ENCODE measurements at regions of chr4 and their contacts with region 1.

Region 1: GRCh38 chr4:5998333-5998936 is 19.8 kb downstream of the C4orf50 start:
- DNase-seq: peak; percentile 88
- H3K4me3 ChIP-seq: peak overlapping the region in 1 of 2 experiments; percentile 57; a peak in 1 of 4 replicates
- H3K27ac ChIP-seq: no peak overlapping the region; a peak in 1 of 4 replicates
- H3K4me1 ChIP-seq: peaks cover 0 to 23% of the 10 kb centered on the region in 2 experiments; a peak in 1 of 4 replicates
- H3K27me3 ChIP-seq: no peaks in the 10 kb centered on the region
- CTCF ChIP-seq: peak; percentile 62
- EP300 ChIP-seq: no peak
- RAD21 ChIP-seq: peak; percentile 96

Region 2: GRCh38 chr4:5798462-5798861 is 200.0 kb before region 1 on chr4:
- CTCF ChIA-PET with region 1: no interaction called
- POLR2A ChIA-PET with region 1: no interaction called
- DNase-seq: no peak
- H3K4me3 ChIP-seq: no peak overlapping the region
- H3K27ac ChIP-seq: no peak overlapping the region
- H3K4me1 ChIP-seq: peaks cover 0 to 2% of the 10 kb centered on the region in 2 experiments; a peak in 1 of 4 replicates
- H3K27me3 ChIP-seq: no peaks in the 10 kb centered on the region
- CTCF ChIP-seq: no peak
- EP300 ChIP-seq: no peak
- RAD21 ChIP-seq: no peak

Region 3: DNA sequence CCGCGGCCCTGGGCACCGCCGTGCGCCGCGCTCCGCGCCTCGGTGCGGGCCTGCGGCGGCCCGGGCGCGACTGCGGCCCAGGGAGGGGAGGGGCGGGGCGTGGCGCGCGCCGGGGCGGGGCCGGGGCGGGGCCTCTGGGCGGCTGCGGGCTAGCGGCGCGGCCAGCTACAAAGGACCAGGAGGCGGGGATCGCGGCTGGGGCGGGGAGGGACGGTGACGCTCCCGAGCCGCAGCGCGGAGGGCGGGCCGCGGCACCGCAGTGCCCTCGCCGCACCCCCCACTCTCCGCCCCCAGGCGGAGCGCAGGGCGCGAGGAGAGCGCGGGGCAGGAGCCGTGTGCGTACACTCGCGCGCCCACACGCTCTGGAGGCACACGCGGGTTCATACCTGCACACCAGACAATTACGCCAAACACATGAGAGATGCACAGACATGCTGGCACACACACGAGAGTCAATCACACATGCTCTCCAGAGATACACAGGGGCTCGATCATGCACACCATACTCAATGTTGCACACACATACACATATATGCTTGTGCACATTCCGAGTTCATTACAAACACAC is 105.3 kb before region 1 on chr4 and contains the start of gene CRMP1:
- CTCF ChIA-PET with region 1: interaction called, 10 read pairs
- POLR2A ChIA-PET with region 1: no interaction called
- DNase-seq: peak; percentile 97
- H3K4me3 ChIP-seq: peak within 1 kb of the TSS in 1 of 2 experiments; percentile 49; a peak in 2 of 4 replicates
- H3K27ac ChIP-seq: peak within 1 kb of the TSS in 1 of 2 experiments; percentile 55; a peak in 2 of 4 replicates
- H3K4me1 ChIP-seq: peaks cover 0 to 25% of the 10 kb centered on the region in 2 experiments; a peak in 1 of 4 replicates
- H3K27me3 ChIP-seq: peaks cover 28% of the 10 kb centered on the region; the same call in 1 of the 2 replicates
- CTCF ChIP-seq: no peak
- EP300 ChIP-seq: no peak
- RAD21 ChIP-seq: no peak
- polyA plus RNA-seq, gene CRMP1: 3.4 and 7.8 TPM in 2 replicates

Region 4: GRCh38 chr4:6011686-6012085 is 13.3 kb after region 1 on chr4:
- CTCF ChIA-PET with region 1: interaction called, 107 read pairs
- POLR2A ChIA-PET with region 1: no interaction called
- DNase-seq: peak; percentile 73
- H3K4me3 ChIP-seq: no peak overlapping the region
- H3K27ac ChIP-seq: no peak overlapping the region; a peak in 1 of 4 replicates
- H3K4me1 ChIP-seq: peaks cover 0 to 9% of the 10 kb centered on the region in 2 experiments; a peak in 1 of 4 replicates
- H3K27me3 ChIP-seq: no peaks in the 10 kb centered on the region
- CTCF ChIP-seq: no peak
- EP300 ChIP-seq: no peak
- RAD21 ChIP-seq: no peak

Region 5: DNA sequence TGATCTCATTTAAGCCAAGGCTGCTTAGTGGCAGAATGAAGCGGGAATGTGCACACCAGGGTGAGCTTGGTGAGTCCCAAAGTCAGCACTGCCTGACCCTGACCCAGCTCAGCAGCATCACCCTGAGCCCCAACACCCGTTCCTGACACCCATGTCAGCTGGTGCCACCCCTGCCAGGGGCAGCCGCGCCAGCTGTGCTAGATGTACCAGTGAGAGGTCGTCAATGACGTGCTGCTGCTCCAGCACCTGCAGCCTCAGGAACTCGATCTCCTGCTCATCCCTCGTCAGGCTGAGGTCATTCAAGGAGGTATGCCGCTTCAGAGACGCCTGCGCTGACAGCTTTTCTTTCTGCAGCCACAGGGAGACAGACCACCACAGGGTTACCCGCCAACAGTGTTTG is 81.5 kb after region 1 on chr4:
- CTCF ChIA-PET with region 1: interaction called, 92 read pairs
- POLR2A ChIA-PET with region 1: no interaction called
- DNase-seq: no peak
- H3K4me3 ChIP-seq: no peak overlapping the region
- H3K27ac ChIP-seq: no peak overlapping the region
- H3K4me1 ChIP-seq: no peaks in the 10 kb centered on the region
- H3K27me3 ChIP-seq: no peaks in the 10 kb centered on the region
- CTCF ChIP-seq: no peak
- EP300 ChIP-seq: no peak
- RAD21 ChIP-seq: no peak

Region 6: DNA sequence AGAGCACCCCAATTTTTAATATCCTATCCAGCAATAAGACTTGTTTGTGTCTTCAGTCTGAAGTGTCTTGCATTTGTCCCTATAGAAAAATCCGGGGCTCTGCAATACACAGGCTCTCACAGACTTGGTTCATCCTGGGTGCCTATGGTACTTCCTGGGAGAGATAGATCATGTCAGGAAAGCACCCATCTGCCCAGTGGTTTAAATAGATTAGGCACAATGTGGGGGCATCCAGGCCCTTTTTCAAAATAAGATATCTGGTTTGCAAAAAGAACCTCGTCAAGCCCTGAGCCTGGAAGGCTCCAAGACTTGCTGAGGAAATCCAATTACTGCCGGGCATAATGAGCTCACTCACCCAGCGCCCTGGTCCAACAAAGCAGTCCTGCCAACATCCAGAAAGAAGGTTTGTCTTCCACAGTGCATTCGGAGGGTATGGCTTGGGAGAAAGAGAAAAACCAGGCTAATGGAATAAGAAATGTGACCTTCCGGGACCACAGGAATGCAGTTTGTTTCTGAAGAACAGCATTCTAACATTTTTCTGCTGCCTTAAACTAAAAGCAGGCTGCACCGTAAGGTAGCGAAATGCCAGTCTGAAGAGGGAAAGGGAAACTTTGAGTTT is 190.4 kb after region 1 on chr4:
- CTCF ChIA-PET with region 1: interaction called, 20 read pairs
- POLR2A ChIA-PET with region 1: no interaction called
- DNase-seq: peak; percentile 67
- H3K4me3 ChIP-seq: no peak overlapping the region
- H3K27ac ChIP-seq: peak overlapping the region in 1 of 2 experiments; percentile 91; a peak in 2 of 4 replicates
- H3K4me1 ChIP-seq: peaks cover 0 to 49% of the 10 kb centered on the region in 2 experiments; a peak in 2 of 4 replicates
- H3K27me3 ChIP-seq: no peaks in the 10 kb centered on the region
- CTCF ChIP-seq: no peak
- EP300 ChIP-seq: peak in 1 of 2 experiments; percentile 60; a peak in 1 of 4 replicates
- RAD21 ChIP-seq: no peak

Region 7: DNA sequence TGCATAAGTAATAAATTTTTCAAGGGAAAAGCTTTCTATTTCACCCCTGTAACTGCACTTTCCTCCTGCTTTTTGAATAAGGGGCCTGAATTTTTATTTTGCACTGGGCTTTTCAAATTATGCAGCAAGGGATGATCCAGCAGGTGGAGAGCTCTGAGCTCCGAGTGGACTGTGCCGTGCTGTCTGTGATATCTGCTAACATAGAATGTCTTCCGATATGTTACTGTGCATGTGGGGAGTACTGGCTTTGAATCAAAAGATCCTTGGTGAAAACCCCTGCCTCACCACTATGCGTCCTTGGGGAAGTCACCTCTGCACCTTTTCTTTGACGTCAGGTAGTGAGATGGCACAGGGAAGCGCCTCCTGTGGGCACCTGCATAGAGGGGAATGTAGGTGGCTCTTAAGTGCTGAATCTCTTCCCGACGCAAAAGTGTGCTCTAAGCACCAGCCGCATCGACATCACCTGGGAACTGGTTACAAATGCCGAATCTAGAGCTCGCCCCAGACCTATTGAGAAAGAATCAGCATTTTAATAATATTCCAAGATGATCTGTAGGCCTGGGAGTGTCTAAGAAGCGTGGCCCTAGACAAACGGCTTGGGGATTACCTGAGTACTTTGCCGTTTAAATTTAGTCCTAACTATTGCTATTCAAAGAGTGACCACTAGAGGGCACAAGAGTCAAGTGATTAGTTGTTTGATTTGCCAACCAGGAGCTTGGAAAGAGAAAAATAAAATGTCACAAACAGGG is 252.0 kb after region 1 on chr4:
- CTCF ChIA-PET with region 1: interaction called, 105 read pairs
- POLR2A ChIA-PET with region 1: no interaction called
- DNase-seq: peak; percentile 76
- H3K4me3 ChIP-seq: peak overlapping the region in 1 of 2 experiments; percentile 12; a peak in 1 of 4 replicates
- H3K27ac ChIP-seq: no peak overlapping the region
- H3K4me1 ChIP-seq: peaks cover 0 to 28% of the 10 kb centered on the region in 2 experiments; a peak in 2 of 4 replicates
- H3K27me3 ChIP-seq: no peaks in the 10 kb centered on the region; the same call in 1 of the 2 replicates
- CTCF ChIP-seq: peak; percentile 83
- EP300 ChIP-seq: no peak
- RAD21 ChIP-seq: peak; percentile 89

Measured in SK-N-SH (cell line).